Heart left ventricle (tissue), 16 donors: ENCODE measurements at regions of chr1 and their contacts with region 1.

Region 1: GRCh38 chr1:205919026-205919746 is 24.1 kb downstream of the SLC26A9 start:
- DNase-seq: peak in 4 of 5 donors; percentile 82 to 86 (median 84)
- ATAC-seq: peak; percentile 47 to 73 (median 56)
- H3K4me3 ChIP-seq: peak overlapping the region in 6 of 12 donors; percentile 0 to 44 (median 36)
- H3K27ac ChIP-seq: peak overlapping the region; percentile 68 to 94 (median 86)
- H3K4me1 ChIP-seq: peaks cover 0 to 66% (median 32%) of the 10 kb centered on the region in 12 donors
- H3K27me3 ChIP-seq: no peaks in the 10 kb centered on the region
- CTCF ChIP-seq: peak; percentile 79 to 96 (median 89)
- POLR2A ChIP-seq: no peak

Region 2: GRCh38 chr1:205658943-205659581 is 260.1 kb before region 1 on chr1:
- intact Hi-C with region 1: loop called in 1 of 10 experiments (anchors 5 kb)
- DNase-seq: peak; percentile 78 to 90 (median 83)
- ATAC-seq: peak; percentile 71 to 88 (median 80)
- H3K4me3 ChIP-seq: no peak overlapping the region
- H3K27ac ChIP-seq: no peak overlapping the region
- H3K4me1 ChIP-seq: peaks cover 0 to 16% (median 6%) of the 10 kb centered on the region in 12 donors
- H3K27me3 ChIP-seq: no peaks in the 10 kb centered on the region
- CTCF ChIP-seq: peak; percentile 77 to 91 (median 85)
- POLR2A ChIP-seq: no peak

Region 3: GRCh38 chr1:205669341-205670149 is 249.6 kb before region 1 on chr1:
- intact Hi-C with region 1: loop called in 1 of 10 experiments (anchors 10 kb)
- DNase-seq: no peak
- ATAC-seq: peak in 1 of 4 donors; percentile 8
- H3K4me3 ChIP-seq: no peak overlapping the region
- H3K27ac ChIP-seq: no peak overlapping the region
- H3K4me1 ChIP-seq: peaks cover 0 to 32% (median 2%) of the 10 kb centered on the region in 12 donors
- H3K27me3 ChIP-seq: no peaks in the 10 kb centered on the region
- CTCF ChIP-seq: no peak
- POLR2A ChIP-seq: no peak

Region 4: DNA sequence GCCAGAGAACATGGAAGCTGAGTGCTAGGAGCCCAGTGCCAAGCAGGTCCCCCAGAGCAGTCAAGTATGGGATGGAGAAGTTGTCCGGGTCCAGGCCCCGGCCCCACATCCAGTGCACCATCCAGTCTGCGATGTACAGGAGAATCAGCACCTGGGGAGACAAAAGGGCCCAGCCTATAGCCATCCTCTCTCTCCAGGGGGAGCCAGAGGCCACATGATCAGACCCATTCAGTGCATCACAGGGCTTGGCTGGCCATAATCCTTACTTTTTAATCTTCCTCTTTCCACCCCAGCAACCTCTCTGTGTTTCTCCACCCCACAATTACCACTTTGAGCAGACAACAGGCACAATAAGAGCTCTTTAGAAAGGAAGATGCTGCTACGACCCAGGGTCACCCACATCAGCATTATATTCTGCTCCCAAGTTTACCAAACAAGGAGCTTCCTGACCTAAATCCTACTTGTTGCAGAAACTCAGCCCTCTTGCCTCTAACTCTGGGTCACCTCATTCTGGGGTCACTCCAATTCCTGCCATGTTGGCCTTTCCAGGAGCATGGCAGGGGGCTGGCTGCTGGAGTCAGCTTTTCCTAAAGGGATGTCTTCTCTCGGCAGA is 127.5 kb before region 1 on chr1:
- intact Hi-C with region 1: loop called in 7 of 10 experiments (anchors 2 to 5 kb)
- DNase-seq: peak in 3 of 5 donors; percentile 60 to 69 (median 61)
- ATAC-seq: peak; percentile 55 to 71 (median 62)
- H3K4me3 ChIP-seq: no peak overlapping the region
- H3K27ac ChIP-seq: peak overlapping the region in 4 of 12 donors; percentile 1 to 25 (median 10)
- H3K4me1 ChIP-seq: peaks cover 0 to 23% (median 1%) of the 10 kb centered on the region in 12 donors
- H3K27me3 ChIP-seq: no peaks in the 10 kb centered on the region
- CTCF ChIP-seq: peak; percentile 49 to 82 (median 74)
- POLR2A ChIP-seq: no peak

Region 5: GRCh38 chr1:206075786-206076755 is 156.9 kb after region 1 on chr1:
- intact Hi-C with region 1: no loop called
- DNase-seq: no peak
- ATAC-seq: no peak
- H3K4me3 ChIP-seq: no peak overlapping the region
- H3K27ac ChIP-seq: no peak overlapping the region
- H3K4me1 ChIP-seq: no peaks in the 10 kb centered on the region
- H3K27me3 ChIP-seq: peaks cover 0 to 4% (median 0%) of the 10 kb centered on the region in 9 donors
- CTCF ChIP-seq: no peak
- POLR2A ChIP-seq: no peak

Region 6: DNA sequence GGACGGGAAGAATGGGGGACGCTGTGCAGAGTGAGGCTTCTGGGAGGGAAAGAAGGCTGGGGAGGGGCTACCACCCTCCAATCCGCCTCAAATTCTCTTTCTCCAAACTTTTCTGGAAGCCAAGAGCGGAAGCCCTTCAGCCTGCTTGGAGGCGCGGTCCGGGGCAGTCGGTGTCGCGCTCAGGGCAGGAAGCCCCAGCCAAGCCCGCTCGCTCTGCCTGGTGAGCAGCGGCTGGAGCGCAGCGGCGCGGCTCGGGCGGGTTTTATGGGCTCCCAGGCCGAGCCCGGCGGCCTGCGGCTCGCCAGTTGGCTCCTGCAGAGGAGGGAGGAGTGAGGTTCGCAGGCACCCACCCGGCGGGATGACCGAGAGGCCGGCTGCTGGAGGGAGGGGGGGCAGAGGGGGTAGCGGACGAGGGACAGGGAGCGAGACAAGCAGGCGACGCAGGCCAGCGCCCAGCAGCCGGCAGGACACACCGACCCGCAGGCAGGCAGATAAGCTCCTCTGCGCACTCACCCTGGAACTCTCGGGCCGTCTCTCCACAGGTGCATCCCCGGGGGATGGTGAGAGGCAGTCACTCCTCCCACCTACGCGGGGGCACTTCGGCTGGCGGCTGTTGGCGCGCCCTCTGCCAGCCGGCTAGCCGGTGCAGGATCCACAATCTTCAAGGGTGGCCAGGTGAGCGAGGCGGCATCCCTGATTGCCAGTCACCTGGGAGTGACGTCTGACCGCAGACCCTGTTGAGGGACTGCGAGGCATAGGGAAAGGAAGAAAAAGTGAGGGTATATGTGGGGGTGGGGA is 198.2 kb after region 1 on chr1 and contains the start of gene AVPR1B:
- intact Hi-C with region 1: no loop called
- DNase-seq: peak; percentile 35 to 78 (median 45)
- ATAC-seq: peak; percentile 41 to 85 (median 82)
- H3K4me3 ChIP-seq: peak within 1 kb of the TSS; percentile 17 to 60 (median 50)
- H3K27ac ChIP-seq: peak within 1 kb of the TSS in 3 of 12 donors; percentile 13 to 56 (median 33)
- H3K4me1 ChIP-seq: peaks cover 0 to 15% (median 7%) of the 10 kb centered on the region in 12 donors
- H3K27me3 ChIP-seq: peaks cover 0 to 19% (median 0%) of the 10 kb centered on the region in 9 donors
- CTCF ChIP-seq: peak in 2 of 12 donors; percentile 12 to 31
- POLR2A ChIP-seq: no peak
- total RNA-seq, gene AVPR1B: not detected